Activated naive CD8-positive, alpha-beta T cell treated with anti-CD3 and anti-CD28 coated beads, Interleukin-2, amount 10 ng/mL, durations not matched to agents 7 days and 5 days (primary cell): ENCODE measurements at regions of chr7 and their contacts with region 1.

Region 1: DNA sequence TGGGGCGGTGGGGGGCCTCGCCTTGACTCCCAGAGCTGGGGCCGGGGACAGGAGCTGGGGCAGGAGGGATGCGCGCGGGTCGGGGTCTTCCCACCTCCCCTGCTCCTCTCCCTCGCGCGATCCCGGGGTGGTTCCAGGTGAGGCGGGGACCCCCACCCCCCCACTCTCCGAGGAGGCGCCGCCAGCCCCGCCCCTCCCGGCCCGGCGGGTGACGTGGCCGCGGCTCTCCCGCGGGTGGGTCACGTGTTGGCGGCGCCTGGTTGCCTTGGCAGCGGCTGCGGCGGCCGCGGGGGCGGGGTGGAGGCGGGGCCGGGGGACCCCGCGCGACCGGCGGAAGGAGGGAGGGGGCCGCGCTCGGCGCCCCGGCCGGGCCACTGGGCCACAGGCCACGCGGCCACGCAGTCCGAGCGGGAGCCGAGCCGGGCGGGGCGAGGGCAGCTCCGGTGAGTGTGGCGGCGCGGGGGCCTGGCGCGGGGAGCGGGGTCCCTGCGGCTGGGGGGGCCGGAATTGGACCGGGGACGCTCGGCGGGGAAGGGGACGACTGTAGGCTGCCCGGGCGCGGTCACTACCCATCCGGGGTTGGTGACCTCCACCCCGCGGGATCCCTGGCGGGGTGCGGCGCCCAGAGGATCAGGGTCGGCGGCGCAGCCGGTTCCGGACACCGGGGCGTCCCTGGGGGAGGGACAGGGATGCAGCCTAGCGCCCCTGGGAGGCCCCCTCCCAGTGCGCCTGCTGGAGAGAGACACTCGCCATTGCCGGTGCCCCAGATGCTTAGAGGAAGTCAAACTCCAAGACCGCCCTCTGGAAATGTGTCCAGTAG is at the start of gene ORAI2:
- DNase-seq: peak; percentile 93
- ATAC-seq: peak; percentile 63
- H3K4me3 Mint-ChIP-seq: peak within 1 kb of the TSS; percentile 90
- H3K27ac Mint-ChIP-seq: peak within 1 kb of the TSS; percentile 93
- H3K4me1 Mint-ChIP-seq: peaks cover 35% of the 10 kb centered on the region
- H3K27me3 Mint-ChIP-seq: no peaks in the 10 kb centered on the region
- total RNA-seq, gene ORAI2: 51.9 to 58.3 TPM

Region 2: GRCh38 chr7:102376964-102377466 is 56.4 kb before region 1 on chr7:
- POLR2A ChIA-PET with region 1: no interaction called
- DNase-seq: no peak
- ATAC-seq: no peak
- H3K4me3 Mint-ChIP-seq: no peak overlapping the region
- H3K27ac Mint-ChIP-seq: peak overlapping the region; percentile 18
- H3K4me1 Mint-ChIP-seq: peaks cover 6% of the 10 kb centered on the region
- H3K27me3 Mint-ChIP-seq: no peaks in the 10 kb centered on the region

Region 3: DNA sequence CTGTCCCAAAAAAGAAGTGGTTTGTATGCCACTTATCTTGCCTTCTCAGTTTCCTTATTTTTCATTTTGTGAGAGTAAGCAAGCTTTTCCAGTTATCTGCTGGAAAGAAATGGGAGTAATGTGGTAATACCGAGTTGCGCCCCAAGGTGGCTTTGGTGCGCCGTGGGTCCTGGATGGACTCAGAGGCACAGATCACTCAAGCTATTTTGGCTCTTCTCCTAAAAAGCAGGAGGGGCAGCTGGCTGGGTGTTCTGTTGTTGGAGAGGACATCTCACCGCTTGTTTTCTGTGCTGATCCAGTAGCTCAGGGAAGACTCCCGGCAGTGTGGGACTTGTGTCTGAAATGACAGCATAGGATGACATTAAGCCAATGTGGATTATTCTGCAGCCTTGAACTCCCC is 20.9 kb before region 1 on chr7:
- POLR2A ChIA-PET with region 1: interaction called, 37 read pairs
- DNase-seq: no peak
- ATAC-seq: peak; percentile 18
- H3K4me3 Mint-ChIP-seq: no peak overlapping the region
- H3K27ac Mint-ChIP-seq: peak overlapping the region; percentile 51
- H3K4me1 Mint-ChIP-seq: peaks cover 38% of the 10 kb centered on the region
- H3K27me3 Mint-ChIP-seq: no peaks in the 10 kb centered on the region